Activated CD4-positive, alpha-beta T cell treated with anti-CD3 and anti-CD28 coated beads for 36 hours (primary cell): ENCODE measurements at regions of chr10 and their contacts with region 1.

Region 1: GRCh38 chr10:73096449-73097304 is at the start of gene P4HA1:
- DNase-seq: peak; percentile 100
- ATAC-seq: peak; percentile 91
- H3K4me3 Mint-ChIP-seq: peak within 1 kb of the TSS; percentile 86
- H3K27ac Mint-ChIP-seq: peak within 1 kb of the TSS; percentile 97
- H3K4me1 Mint-ChIP-seq: peaks cover 27% of the 10 kb centered on the region
- H3K27me3 Mint-ChIP-seq: no peaks in the 10 kb centered on the region
- total RNA-seq, gene P4HA1: 51.8 to 58.5 TPM

Region 2: GRCh38 chr10:72625608-72626443 is 470.9 kb before region 1 on chr10 and contains the start of gene MICU1:
- CTCF ChIA-PET with region 1: no interaction called
- POLR2A ChIA-PET with region 1: no interaction called
- intact Hi-C with region 1: loop called in 1 of 2 experiments (anchors 1 kb)
- DNase-seq: peak; percentile 98
- ATAC-seq: peak; percentile 99
- H3K4me3 Mint-ChIP-seq: peak within 1 kb of the TSS; percentile 94
- H3K27ac Mint-ChIP-seq: peak within 1 kb of the TSS; percentile 91
- H3K4me1 Mint-ChIP-seq: peaks cover 7% of the 10 kb centered on the region
- H3K27me3 Mint-ChIP-seq: no peaks in the 10 kb centered on the region
- total RNA-seq, gene MICU1: 41.0 to 51.5 TPM

Region 3: GRCh38 chr10:73110345-73110849 is 13.7 kb after region 1 on chr10 and contains the start of gene NUDT13:
- CTCF ChIA-PET with region 1: interaction called, 47 read pairs
- POLR2A ChIA-PET with region 1: interaction called, 18 read pairs
- intact Hi-C with region 1: loop called (anchors 2 kb)
- DNase-seq: peak; percentile 60
- ATAC-seq: peak; percentile 89
- H3K4me3 Mint-ChIP-seq: peak within 1 kb of the TSS; percentile 71
- H3K27ac Mint-ChIP-seq: peak within 1 kb of the TSS; percentile 90
- H3K4me1 Mint-ChIP-seq: peaks cover 14% of the 10 kb centered on the region
- H3K27me3 Mint-ChIP-seq: no peaks in the 10 kb centered on the region
- total RNA-seq, gene NUDT13: 1.6 to 2.2 TPM

Region 4: GRCh38 chr10:73205081-73205480 is 108.4 kb after region 1 on chr10:
- CTCF ChIA-PET with region 1: interaction called, 12 read pairs
- POLR2A ChIA-PET with region 1: no interaction called
- intact Hi-C with region 1: no loop called
- DNase-seq: no peak
- ATAC-seq: no peak
- H3K4me3 Mint-ChIP-seq: no peak overlapping the region
- H3K27ac Mint-ChIP-seq: no peak overlapping the region
- H3K4me1 Mint-ChIP-seq: peaks cover 3% of the 10 kb centered on the region
- H3K27me3 Mint-ChIP-seq: no peaks in the 10 kb centered on the region

Region 5: GRCh38 chr10:73413528-73414229 is 317.0 kb after region 1 on chr10 and contains the start of gene ANXA7:
- CTCF ChIA-PET with region 1: interaction called, 4 read pairs
- POLR2A ChIA-PET with region 1: interaction called, 3 read pairs
- intact Hi-C with region 1: loop called in 1 of 2 experiments (anchors 1 kb)
- DNase-seq: peak; percentile 97
- ATAC-seq: peak; percentile 96
- H3K4me3 Mint-ChIP-seq: peak within 1 kb of the TSS; percentile 94
- H3K27ac Mint-ChIP-seq: peak within 1 kb of the TSS; percentile 93
- H3K4me1 Mint-ChIP-seq: peaks cover 52% of the 10 kb centered on the region
- H3K27me3 Mint-ChIP-seq: peaks cover 3% of the 10 kb centered on the region
- total RNA-seq, gene ANXA7: 94.6 to 118 TPM

Region 6: DNA sequence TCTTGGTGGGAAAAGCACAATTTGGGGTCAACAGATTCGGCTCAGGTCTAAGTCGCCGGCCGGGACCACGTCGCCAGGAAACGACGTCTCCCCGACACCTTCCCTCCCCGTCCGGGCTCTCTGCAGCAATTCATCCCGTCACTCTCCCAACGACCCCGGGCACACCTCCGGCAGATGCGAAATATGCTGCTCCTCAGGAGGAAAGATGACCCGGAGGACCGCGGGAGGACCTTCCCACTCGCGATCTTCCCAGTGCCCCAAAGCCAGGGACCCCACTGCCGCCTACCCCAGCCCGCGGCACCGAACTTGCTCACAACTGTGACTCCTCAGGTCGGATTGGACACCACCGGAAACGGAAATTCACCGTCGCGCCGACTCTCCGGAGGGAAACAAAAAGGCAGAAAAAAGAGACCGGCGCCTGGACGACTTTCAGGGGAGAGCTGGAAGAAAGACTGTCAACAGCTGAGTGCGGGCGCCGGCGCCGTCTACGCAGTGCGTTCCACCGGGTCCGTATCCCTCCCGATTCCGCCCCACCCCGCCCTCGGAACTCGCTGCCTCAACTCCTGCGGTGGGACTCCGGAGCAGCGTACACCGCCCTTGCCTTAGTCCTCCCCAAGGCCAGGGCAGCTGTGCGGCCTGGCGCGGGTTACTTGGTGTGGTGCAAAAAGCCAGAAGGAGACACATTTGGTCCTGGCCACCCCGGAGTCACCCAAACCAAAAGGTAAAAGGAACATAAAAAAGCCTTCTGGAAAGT is 633.7 kb after region 1 on chr10:
- CTCF ChIA-PET with region 1: no interaction called
- POLR2A ChIA-PET with region 1: no interaction called
- intact Hi-C with region 1: loop called in 1 of 2 experiments (anchors 1 kb)
- DNase-seq: peak; percentile 95
- ATAC-seq: peak; percentile 93
- H3K4me3 Mint-ChIP-seq: peak overlapping the region; percentile 98
- H3K27ac Mint-ChIP-seq: peak overlapping the region; percentile 97
- H3K4me1 Mint-ChIP-seq: peaks cover 9% of the 10 kb centered on the region
- H3K27me3 Mint-ChIP-seq: no peaks in the 10 kb centered on the region

Region 7: DNA sequence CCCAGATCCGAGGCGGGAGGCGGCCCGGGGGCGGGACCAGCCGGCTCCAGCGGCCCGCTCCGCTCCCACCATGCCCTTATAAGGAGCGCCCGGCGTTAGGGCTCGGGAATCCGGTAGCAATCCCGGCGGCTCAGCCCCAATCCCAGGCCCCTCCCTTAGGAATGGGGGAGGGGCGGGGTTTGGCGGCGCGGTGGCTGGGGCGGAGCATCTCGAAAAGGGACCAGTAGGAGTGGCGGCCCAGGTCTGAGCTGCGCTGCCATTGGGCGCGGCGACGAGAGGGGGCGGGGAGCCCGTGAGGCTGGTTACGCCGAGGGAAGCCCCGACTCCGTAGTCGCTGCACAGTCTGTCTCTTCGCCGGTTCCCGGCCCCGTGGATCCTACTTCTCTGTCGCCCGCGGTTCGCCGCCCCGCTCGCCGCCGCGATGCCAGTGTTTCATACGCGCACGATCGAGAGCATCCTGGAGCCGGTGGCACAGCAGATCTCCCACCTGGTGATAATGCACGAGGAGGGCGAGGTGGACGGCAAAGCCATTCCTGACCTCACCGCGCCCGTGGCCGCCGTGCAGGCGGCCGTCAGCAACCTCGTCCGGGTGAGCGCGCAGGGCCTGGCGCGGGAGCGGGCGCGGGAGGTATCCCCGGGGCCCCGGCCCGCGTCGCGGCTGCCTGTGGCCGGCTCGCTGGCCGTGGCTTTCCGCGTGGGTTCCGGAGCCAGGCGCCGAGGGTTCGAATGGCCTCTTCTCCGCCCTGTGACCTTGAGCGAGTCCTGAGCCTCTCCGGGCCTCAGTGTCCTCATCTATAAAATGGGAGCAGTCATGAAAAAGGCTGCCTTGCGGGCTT is 901.3 kb after region 1 on chr10 and contains the start of gene VCL:
- CTCF ChIA-PET with region 1: no interaction called
- POLR2A ChIA-PET with region 1: no interaction called
- intact Hi-C with region 1: loop called in 1 of 2 experiments (anchors 5 kb)
- DNase-seq: peak; percentile 97
- ATAC-seq: peak; percentile 98
- H3K4me3 Mint-ChIP-seq: peak within 1 kb of the TSS; percentile 89
- H3K27ac Mint-ChIP-seq: peak within 1 kb of the TSS; percentile 97
- H3K4me1 Mint-ChIP-seq: peaks cover 39% of the 10 kb centered on the region
- H3K27me3 Mint-ChIP-seq: no peaks in the 10 kb centered on the region
- total RNA-seq, gene VCL: 20.7 to 22.7 TPM